Heart left ventricle (tissue), 16 donors: ENCODE measurements at regions of chr7 and their contacts with region 1.

Region 1: GRCh38 chr7:26376175-26376917 is 84.7 kb downstream of the SNX10 start:
- DNase-seq: peak in 3 of 5 donors; percentile 7 to 70 (median 21)
- ATAC-seq: peak in 3 of 4 donors; percentile 13 to 46 (median 34)
- H3K4me3 ChIP-seq: peak overlapping the region in 10 of 12 donors; percentile 14 to 56 (median 38)
- H3K27ac ChIP-seq: no peak overlapping the region
- H3K4me1 ChIP-seq: peaks cover 0 to 16% (median 4%) of the 10 kb centered on the region in 12 donors
- H3K27me3 ChIP-seq: peaks cover 17 to 98% (median 76%) of the 10 kb centered on the region in 9 donors
- CTCF ChIP-seq: no peak
- POLR2A ChIP-seq: no peak

Region 2: DNA sequence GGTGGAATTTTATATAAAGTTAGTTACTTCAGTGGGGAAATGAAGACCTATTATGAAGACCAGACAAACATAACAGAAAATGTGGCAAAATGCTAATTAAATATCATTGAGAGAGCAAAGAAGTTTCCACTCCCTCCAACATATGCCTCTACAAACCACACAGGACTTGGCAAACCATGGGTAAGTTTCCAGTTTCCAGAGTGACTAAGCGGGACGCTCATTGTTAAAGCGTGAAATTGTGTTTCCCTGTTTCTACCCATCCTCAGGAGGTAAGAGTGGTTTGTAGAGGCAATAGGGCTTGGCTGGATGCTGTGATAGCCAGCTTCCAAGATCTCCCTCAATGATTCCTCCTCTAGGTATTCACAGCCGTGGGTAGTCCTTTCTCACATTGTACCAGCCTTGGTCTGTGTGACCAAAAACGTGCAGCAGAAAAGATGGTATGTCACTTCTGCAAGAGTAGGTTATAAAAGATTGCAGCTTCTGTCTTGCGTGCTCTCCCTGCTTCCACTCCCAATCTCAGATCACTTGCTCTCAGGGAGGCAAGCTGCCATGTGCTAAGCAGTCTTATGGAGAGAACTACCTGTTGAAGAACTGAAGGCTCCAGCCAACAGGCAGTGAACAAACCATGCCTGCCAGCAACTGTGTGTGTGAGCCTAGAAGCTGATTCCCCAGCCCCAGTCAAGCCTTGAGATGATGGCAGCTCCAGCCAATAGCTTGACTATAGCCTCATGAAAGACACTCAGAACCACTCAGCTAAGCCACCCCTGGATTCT is 139.1 kb before region 1 on chr7:
- intact Hi-C with region 1: no loop called
- DNase-seq: no peak
- ATAC-seq: no peak
- H3K4me3 ChIP-seq: no peak overlapping the region
- H3K27ac ChIP-seq: no peak overlapping the region
- H3K4me1 ChIP-seq: no peaks in the 10 kb centered on the region
- H3K27me3 ChIP-seq: peaks cover 0 to 21% (median 0%) of the 10 kb centered on the region in 9 donors
- CTCF ChIP-seq: no peak
- POLR2A ChIP-seq: no peak

Region 3: GRCh38 chr7:26490650-26491624 is 114.6 kb after region 1 on chr7:
- intact Hi-C with region 1: loop called in 1 of 10 experiments (anchors 10 kb)
- DNase-seq: no peak
- ATAC-seq: peak in 2 of 4 donors; percentile 34 to 42
- H3K4me3 ChIP-seq: no peak overlapping the region
- H3K27ac ChIP-seq: no peak overlapping the region
- H3K4me1 ChIP-seq: no peaks in the 10 kb centered on the region
- H3K27me3 ChIP-seq: peaks cover 0 to 4% (median 0%) of the 10 kb centered on the region in 9 donors
- CTCF ChIP-seq: no peak
- POLR2A ChIP-seq: no peak

Region 4: GRCh38 chr7:26500749-26501352 is 124.5 kb after region 1 on chr7:
- intact Hi-C with region 1: loop called in 4 of 10 experiments (anchors 5 to 10 kb)
- DNase-seq: no peak
- ATAC-seq: no peak
- H3K4me3 ChIP-seq: no peak overlapping the region
- H3K27ac ChIP-seq: no peak overlapping the region
- H3K4me1 ChIP-seq: no peaks in the 10 kb centered on the region
- H3K27me3 ChIP-seq: peaks cover 0 to 11% (median 0%) of the 10 kb centered on the region in 9 donors
- CTCF ChIP-seq: peak in 8 of 12 donors; percentile 13 to 46 (median 31)
- POLR2A ChIP-seq: no peak